ENCODE measurements at regions of chr6 and their contacts with region 1.

Region 1: GRCh38 chr6:132300323-132300949 is 100.8 kb downstream of the MOXD1 start:
- DNase-seq: peak; percentile 73
- ATAC-seq: peak; percentile 96
- H3K4me3 ChIP-seq: no peak overlapping the region
- H3K4me3 Mint-ChIP-seq: no peak overlapping the region
- H3K27ac ChIP-seq: no peak overlapping the region
- H3K27ac Mint-ChIP-seq: no peak overlapping the region
- H3K4me1 ChIP-seq: no peaks in the 10 kb centered on the region
- H3K4me1 Mint-ChIP-seq: no peaks in the 10 kb centered on the region
- H3K27me3 ChIP-seq: no peaks in the 10 kb centered on the region
- H3K27me3 Mint-ChIP-seq: no peaks in the 10 kb centered on the region
- CTCF ChIP-seq: peak; percentile 81

Region 2: DNA sequence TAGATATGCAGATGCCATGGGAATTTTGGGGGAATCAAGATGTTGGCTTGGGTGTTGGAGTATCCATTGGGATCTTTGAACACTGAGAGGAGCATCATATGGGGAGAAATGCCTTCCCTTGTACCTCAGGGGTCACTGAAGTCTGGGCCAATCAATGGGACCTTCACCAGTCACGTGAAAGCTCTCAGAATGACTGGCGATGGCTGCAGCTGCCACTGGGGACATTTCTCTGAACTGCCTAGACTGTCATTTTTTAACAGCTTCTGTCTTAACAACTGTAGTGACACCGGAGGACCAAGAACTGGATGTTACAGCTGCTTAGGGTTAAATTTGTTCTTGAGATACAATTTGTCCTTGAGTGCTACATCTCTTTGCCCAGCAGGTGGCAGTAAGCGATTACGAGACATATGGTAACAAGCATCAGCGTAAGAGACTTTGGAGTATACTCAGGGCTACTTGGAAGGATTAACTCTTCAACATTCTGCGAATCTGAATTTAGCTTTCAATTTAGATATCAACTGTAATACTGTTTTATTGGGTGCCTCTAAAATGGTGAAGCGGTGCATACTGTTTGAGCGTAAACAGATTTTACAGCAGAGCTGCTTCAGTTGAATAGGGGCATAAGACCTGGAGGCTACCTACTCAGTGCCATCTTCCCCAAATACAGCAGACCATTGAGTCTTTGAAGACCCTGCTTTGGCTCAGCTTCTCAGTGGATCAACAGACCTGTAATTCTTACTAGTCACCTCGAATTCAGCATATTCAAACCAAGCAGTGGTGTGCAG is 385.3 kb before region 1 on chr6:
- CTCF ChIA-PET with region 1: interaction called, 26 read pairs
- POLR2A ChIA-PET with region 1: no interaction called
- intact Hi-C with region 1: loop called (anchors 2 kb)
- DNase-seq: peak; percentile 75
- ATAC-seq: peak; percentile 80
- H3K4me3 ChIP-seq: no peak overlapping the region
- H3K4me3 Mint-ChIP-seq: no peak overlapping the region
- H3K27ac ChIP-seq: no peak overlapping the region
- H3K27ac Mint-ChIP-seq: no peak overlapping the region
- H3K4me1 ChIP-seq: peaks cover 17 to 20% of the 10 kb centered on the region in 2 donors
- H3K4me1 Mint-ChIP-seq: peaks cover 21% of the 10 kb centered on the region
- H3K27me3 ChIP-seq: peaks cover 0 to 27% (median 12%) of the 10 kb centered on the region in 4 experiments
- H3K27me3 Mint-ChIP-seq: peaks cover 39% of the 10 kb centered on the region
- CTCF ChIP-seq: peak; percentile 88

Region 3: DNA sequence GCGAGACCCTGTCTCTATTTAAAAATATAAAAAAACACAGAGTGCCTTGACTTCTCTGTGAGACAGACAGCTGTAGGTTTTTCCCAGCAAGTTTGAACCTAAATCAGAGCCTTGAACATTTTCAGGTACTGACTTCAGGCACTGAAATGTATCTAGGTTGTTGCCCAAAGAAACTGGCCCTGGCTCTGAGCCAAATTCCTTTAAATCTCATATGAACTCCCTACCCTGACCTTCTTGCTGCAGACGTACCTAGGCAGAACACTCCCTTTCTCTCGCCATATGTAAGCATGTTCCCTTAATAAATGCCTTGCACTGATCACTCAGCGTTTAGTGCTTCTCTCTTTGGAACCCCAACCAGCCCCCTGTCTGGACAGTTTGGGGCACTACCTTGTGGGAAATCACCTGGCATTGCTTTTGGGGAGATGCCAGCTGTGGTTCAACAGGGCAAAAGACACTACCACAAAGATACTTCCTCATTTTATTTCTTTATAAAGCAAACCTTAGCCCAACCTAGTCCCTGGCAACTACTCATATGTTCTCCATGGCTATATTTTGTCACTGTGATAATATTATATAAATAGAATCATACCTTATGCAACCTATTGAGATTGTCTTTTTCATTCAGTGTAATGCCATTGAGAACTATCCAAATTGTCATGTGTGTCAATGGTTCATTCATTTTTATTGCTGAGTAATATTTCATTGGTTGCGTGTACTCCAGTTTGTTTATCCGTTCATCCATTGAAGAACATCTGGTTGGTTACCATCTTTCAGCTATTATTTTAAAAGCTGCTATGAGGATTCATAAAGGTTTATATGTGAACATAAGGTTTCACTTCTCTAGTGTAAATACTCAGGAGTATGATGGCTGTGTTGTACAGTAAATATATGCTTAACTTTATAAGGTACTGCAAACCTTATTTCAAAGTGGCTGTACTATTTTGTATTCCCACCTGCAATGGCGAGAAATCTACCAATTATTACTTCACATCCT is 14.1 kb before region 1 on chr6:
- CTCF ChIA-PET with region 1: interaction called, 530 read pairs
- POLR2A ChIA-PET with region 1: no interaction called
- intact Hi-C with region 1: no loop called
- DNase-seq: peak; percentile 84
- ATAC-seq: peak; percentile 88
- H3K4me3 ChIP-seq: no peak overlapping the region
- H3K4me3 Mint-ChIP-seq: peak overlapping the region; percentile 52
- H3K27ac ChIP-seq: no peak overlapping the region
- H3K27ac Mint-ChIP-seq: peak overlapping the region; percentile 37
- H3K4me1 ChIP-seq: peaks cover 11 to 16% of the 10 kb centered on the region in 2 donors
- H3K4me1 Mint-ChIP-seq: peaks cover 18% of the 10 kb centered on the region
- H3K27me3 ChIP-seq: no peaks in the 10 kb centered on the region
- H3K27me3 Mint-ChIP-seq: no peaks in the 10 kb centered on the region
- CTCF ChIP-seq: no peak

Region 4: GRCh38 chr6:132365281-132365907 is 65.0 kb after region 1 on chr6:
- CTCF ChIA-PET with region 1: interaction called, 15 read pairs
- POLR2A ChIA-PET with region 1: no interaction called
- intact Hi-C with region 1: no loop called
- DNase-seq: peak; percentile 45
- ATAC-seq: peak; percentile 63
- H3K4me3 ChIP-seq: peak overlapping the region in 1 of 5 experiments; percentile 21
- H3K4me3 Mint-ChIP-seq: peak overlapping the region; percentile 71
- H3K27ac ChIP-seq: peak overlapping the region; percentile 57 to 70
- H3K27ac Mint-ChIP-seq: peak overlapping the region; percentile 86
- H3K4me1 ChIP-seq: peaks cover 29 to 52% of the 10 kb centered on the region in 2 donors
- H3K4me1 Mint-ChIP-seq: peaks cover 55% of the 10 kb centered on the region
- H3K27me3 ChIP-seq: no peaks in the 10 kb centered on the region
- H3K27me3 Mint-ChIP-seq: no peaks in the 10 kb centered on the region
- CTCF ChIP-seq: no peak

Region 5: GRCh38 chr6:132401120-132401945 is 100.9 kb after region 1 on chr6 and contains the start of gene MOXD1:
- CTCF ChIA-PET with region 1: interaction called, 6 read pairs
- POLR2A ChIA-PET with region 1: no interaction called
- intact Hi-C with region 1: loop called (anchors 2 kb)
- DNase-seq: peak; percentile 64
- ATAC-seq: peak; percentile 83
- H3K4me3 ChIP-seq: peak within 1 kb of the TSS; percentile 51 to 84 (median 73)
- H3K4me3 Mint-ChIP-seq: peak within 1 kb of the TSS; percentile 88
- H3K27ac ChIP-seq: no peak within 1 kb of the TSS
- H3K27ac Mint-ChIP-seq: peak within 1 kb of the TSS; percentile 76
- H3K4me1 ChIP-seq: peaks cover 13 to 14% of the 10 kb centered on the region in 2 donors
- H3K4me1 Mint-ChIP-seq: peaks cover 24% of the 10 kb centered on the region
- H3K27me3 ChIP-seq: peaks cover 0 to 19% (median 11%) of the 10 kb centered on the region in 4 experiments
- H3K27me3 Mint-ChIP-seq: peaks cover 20% of the 10 kb centered on the region
- CTCF ChIP-seq: no peak
- total RNA-seq, gene MOXD1: 6.7 and 7.0 TPM in 2 replicates

Region 6: GRCh38 chr6:132768051-132768517 is 467.6 kb after region 1 on chr6:
- CTCF ChIA-PET with region 1: interaction called, 3 read pairs
- POLR2A ChIA-PET with region 1: no interaction called
- intact Hi-C with region 1: loop called (anchors 10 kb)
- DNase-seq: peak; percentile 60
- ATAC-seq: peak; percentile 79
- H3K4me3 ChIP-seq: no peak overlapping the region
- H3K4me3 Mint-ChIP-seq: peak overlapping the region; percentile 27
- H3K27ac ChIP-seq: no peak overlapping the region
- H3K27ac Mint-ChIP-seq: peak overlapping the region; percentile 38
- H3K4me1 ChIP-seq: peaks cover 7 to 14% of the 10 kb centered on the region in 2 donors
- H3K4me1 Mint-ChIP-seq: peaks cover 22% of the 10 kb centered on the region
- H3K27me3 ChIP-seq: no peaks in the 10 kb centered on the region
- H3K27me3 Mint-ChIP-seq: no peaks in the 10 kb centered on the region
- CTCF ChIP-seq: peak; percentile 63